Activated CD8-positive, alpha-beta memory T cell treated with anti-CD3 and anti-CD28 coated beads, Interleukin-2, amount 10 ng/mL, durations not matched to agents 7 days and 5 days (primary cell): ENCODE measurements at regions of chr6 and their contacts with region 1.

Region 1: GRCh38 chr6:25263657-25264056 is 15.5 kb upstream of the CARMIL1 start:
- DNase-seq: no peak
- ATAC-seq: no peak
- H3K4me3 Mint-ChIP-seq: no peak overlapping the region
- H3K27ac Mint-ChIP-seq: no peak overlapping the region
- H3K4me1 Mint-ChIP-seq: peaks cover 2% of the 10 kb centered on the region
- H3K27me3 Mint-ChIP-seq: peaks cover 18% of the 10 kb centered on the region

Region 2: GRCh38 chr6:24919004-24919892 is 344.4 kb before region 1 on chr6:
- CTCF ChIA-PET with region 1: no interaction called
- DNase-seq: no peak
- ATAC-seq: peak; percentile 40
- H3K4me3 Mint-ChIP-seq: peak overlapping the region; percentile 1
- H3K27ac Mint-ChIP-seq: peak overlapping the region; percentile 47
- H3K4me1 Mint-ChIP-seq: peaks cover 67% of the 10 kb centered on the region
- H3K27me3 Mint-ChIP-seq: no peaks in the 10 kb centered on the region

Region 3: GRCh38 chr6:25173951-25174474 is 89.6 kb before region 1 on chr6:
- CTCF ChIA-PET with region 1: no interaction called
- DNase-seq: no peak
- ATAC-seq: no peak
- H3K4me3 Mint-ChIP-seq: no peak overlapping the region
- H3K27ac Mint-ChIP-seq: peak overlapping the region; percentile 47
- H3K4me1 Mint-ChIP-seq: peaks cover 64% of the 10 kb centered on the region
- H3K27me3 Mint-ChIP-seq: no peaks in the 10 kb centered on the region

Region 4: DNA sequence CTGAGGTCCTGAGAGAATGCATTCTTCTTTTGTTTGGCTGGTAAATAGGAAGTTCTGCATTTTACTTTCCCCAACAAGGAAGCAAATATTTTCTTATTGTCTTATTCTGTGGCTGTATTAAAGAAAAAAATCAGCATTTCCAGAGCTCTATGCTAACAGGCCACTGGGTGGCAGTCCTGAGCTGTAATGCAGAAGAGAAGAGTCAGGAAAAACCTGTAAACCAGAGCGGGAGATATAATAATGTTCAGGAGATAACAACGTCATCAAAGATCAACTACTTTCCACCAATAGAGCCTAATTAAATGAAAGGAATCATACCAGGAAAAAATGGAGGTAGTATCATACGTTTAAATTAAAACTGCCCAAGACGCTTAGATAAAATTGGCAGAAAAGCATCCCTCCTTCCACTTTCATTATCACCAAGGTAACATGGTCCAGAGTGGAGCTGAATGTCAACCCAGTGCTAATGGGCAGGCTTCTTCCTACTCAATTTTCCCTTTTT is 40.1 kb before region 1 on chr6:
- CTCF ChIA-PET with region 1: interaction called, 16 read pairs
- DNase-seq: peak; percentile 74
- ATAC-seq: peak; percentile 67
- H3K4me3 Mint-ChIP-seq: peak overlapping the region; percentile 69
- H3K27ac Mint-ChIP-seq: no peak overlapping the region
- H3K4me1 Mint-ChIP-seq: peaks cover 15% of the 10 kb centered on the region
- H3K27me3 Mint-ChIP-seq: no peaks in the 10 kb centered on the region

Region 5: GRCh38 chr6:25250878-25251277 is 12.8 kb before region 1 on chr6:
- CTCF ChIA-PET with region 1: interaction called, 19 read pairs
- DNase-seq: no peak
- ATAC-seq: no peak
- H3K4me3 Mint-ChIP-seq: no peak overlapping the region
- H3K27ac Mint-ChIP-seq: no peak overlapping the region
- H3K4me1 Mint-ChIP-seq: peaks cover 10% of the 10 kb centered on the region
- H3K27me3 Mint-ChIP-seq: peaks cover 15% of the 10 kb centered on the region

Region 6: DNA sequence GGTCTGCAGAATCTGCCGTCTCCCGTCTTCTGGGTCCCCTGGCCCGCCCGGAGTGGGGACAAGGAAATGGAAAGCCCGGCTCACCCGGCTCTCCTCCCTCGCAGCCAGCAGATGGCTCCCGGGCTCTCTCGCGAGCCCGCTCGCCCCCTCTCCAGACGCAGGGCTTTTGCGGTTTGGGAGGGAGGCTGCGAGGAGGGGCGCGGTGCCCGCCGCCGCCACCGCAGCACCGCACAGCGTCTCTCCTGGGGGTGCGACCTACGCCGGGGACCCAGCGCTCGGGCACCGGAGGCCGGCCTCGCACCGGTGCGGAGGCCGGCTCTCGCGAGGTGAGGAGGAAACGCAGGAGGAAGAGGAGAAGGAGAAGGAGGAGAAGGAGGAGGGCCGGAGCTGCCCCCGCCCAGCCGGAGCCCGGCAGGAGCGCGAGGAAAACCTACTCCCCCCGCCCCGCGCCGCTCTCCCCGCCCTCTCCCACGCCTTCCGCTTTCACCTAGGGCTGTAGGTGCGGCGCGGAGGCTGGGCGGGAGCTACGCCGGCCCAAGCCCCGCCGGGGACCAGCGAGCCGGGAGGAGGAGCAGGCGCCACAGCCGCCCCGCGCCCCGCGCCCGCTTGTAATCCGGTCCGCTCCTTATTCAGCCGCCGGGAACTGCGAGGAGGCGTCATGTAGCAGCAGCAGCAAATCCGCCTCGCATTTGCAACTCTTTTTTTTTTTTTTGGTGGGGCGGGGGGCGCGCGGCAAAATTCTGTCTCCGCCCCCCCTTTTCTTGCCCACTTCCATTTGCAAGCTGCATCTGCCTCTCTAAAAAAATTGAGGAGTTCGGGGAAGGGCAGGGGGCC is 15.5 kb after region 1 on chr6 and contains the start of gene CARMIL1:
- CTCF ChIA-PET with region 1: interaction called, 23 read pairs
- DNase-seq: peak; percentile 80
- ATAC-seq: peak; percentile 90
- H3K4me3 Mint-ChIP-seq: peak within 1 kb of the TSS; percentile 76
- H3K27ac Mint-ChIP-seq: peak within 1 kb of the TSS; percentile 62
- H3K4me1 Mint-ChIP-seq: peaks cover 20% of the 10 kb centered on the region
- H3K27me3 Mint-ChIP-seq: peaks cover 18% of the 10 kb centered on the region
- total RNA-seq, gene CARMIL1: 3.4 to 3.8 TPM

Region 7: GRCh38 chr6:25346064-25346463 is 82.4 kb after region 1 on chr6:
- CTCF ChIA-PET with region 1: no interaction called
- DNase-seq: no peak
- ATAC-seq: no peak
- H3K4me3 Mint-ChIP-seq: no peak overlapping the region
- H3K27ac Mint-ChIP-seq: no peak overlapping the region
- H3K4me1 Mint-ChIP-seq: peaks cover 2% of the 10 kb centered on the region
- H3K27me3 Mint-ChIP-seq: no peaks in the 10 kb centered on the region

Region 8: GRCh38 chr6:25377664-25378063 is 114.0 kb after region 1 on chr6:
- CTCF ChIA-PET with region 1: no interaction called
- DNase-seq: no peak
- ATAC-seq: peak; percentile 9
- H3K4me3 Mint-ChIP-seq: no peak overlapping the region
- H3K27ac Mint-ChIP-seq: no peak overlapping the region
- H3K4me1 Mint-ChIP-seq: peaks cover 12% of the 10 kb centered on the region
- H3K27me3 Mint-ChIP-seq: no peaks in the 10 kb centered on the region

Region 9: DNA sequence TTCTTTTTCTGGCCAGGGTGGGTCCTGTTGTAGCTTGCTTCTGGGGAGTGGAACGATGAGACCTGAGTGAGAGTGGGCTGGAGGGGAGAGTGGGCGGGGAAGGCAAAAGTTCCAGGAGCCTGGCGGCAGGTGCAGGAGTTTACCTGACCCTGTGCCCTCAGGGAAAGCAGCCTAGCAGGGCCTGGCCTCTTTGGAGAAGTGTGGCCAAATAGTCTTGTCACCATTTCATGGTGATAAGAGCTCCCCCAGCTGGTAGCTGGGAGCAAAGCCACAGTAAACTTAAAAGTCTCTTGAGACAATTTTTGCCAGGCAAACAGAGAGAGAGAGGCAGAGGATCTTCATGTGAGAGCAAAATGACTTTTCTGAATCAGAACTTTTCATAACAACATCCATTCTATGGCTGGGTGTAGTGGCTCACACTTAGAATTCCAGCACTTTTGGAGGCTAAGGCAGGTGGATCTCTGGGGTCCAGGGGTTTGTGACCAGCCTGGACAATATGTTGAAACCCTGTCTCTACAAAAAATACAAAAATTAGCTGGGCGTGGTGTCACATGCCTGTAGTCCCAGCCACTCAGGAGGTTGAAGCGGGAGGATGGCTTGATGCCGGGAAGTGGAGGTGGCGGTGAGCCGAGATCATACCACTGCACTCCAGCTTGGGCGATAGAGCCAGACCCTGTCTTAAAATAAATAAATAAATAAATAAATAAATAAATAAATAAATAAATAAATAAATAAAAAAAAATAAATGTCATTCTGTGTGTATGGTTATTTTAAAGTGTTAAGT is 226.6 kb after region 1 on chr6:
- CTCF ChIA-PET with region 1: interaction called, 94 read pairs
- DNase-seq: peak; percentile 79
- ATAC-seq: peak; percentile 79
- H3K4me3 Mint-ChIP-seq: no peak overlapping the region
- H3K27ac Mint-ChIP-seq: no peak overlapping the region
- H3K4me1 Mint-ChIP-seq: peaks cover 4% of the 10 kb centered on the region
- H3K27me3 Mint-ChIP-seq: no peaks in the 10 kb centered on the region

Region 10: DNA sequence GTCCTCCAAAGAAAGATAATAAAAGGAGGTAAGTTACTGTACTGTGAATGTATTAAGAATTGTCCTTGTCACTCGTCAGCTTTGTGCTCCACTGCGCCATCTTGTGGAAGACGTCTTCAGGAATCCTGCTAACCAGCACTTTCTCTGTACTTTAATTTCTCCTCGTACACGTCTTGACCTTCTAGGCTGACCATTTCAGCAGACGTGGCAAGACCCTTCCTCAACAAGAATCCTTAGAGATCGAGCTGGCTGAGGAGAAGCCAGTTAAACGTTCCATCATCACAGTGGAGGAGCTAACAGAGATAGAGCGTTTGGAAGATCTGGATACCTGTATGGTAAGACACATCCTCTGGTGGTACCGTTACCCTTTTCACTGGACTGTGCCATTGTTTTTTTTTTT is 292.9 kb after region 1 on chr6:
- CTCF ChIA-PET with region 1: interaction called, 39 read pairs
- DNase-seq: peak; percentile 86
- ATAC-seq: peak; percentile 64
- H3K4me3 Mint-ChIP-seq: no peak overlapping the region
- H3K27ac Mint-ChIP-seq: no peak overlapping the region
- H3K4me1 Mint-ChIP-seq: peaks cover 2% of the 10 kb centered on the region
- H3K27me3 Mint-ChIP-seq: no peaks in the 10 kb centered on the region

Region 11: DNA sequence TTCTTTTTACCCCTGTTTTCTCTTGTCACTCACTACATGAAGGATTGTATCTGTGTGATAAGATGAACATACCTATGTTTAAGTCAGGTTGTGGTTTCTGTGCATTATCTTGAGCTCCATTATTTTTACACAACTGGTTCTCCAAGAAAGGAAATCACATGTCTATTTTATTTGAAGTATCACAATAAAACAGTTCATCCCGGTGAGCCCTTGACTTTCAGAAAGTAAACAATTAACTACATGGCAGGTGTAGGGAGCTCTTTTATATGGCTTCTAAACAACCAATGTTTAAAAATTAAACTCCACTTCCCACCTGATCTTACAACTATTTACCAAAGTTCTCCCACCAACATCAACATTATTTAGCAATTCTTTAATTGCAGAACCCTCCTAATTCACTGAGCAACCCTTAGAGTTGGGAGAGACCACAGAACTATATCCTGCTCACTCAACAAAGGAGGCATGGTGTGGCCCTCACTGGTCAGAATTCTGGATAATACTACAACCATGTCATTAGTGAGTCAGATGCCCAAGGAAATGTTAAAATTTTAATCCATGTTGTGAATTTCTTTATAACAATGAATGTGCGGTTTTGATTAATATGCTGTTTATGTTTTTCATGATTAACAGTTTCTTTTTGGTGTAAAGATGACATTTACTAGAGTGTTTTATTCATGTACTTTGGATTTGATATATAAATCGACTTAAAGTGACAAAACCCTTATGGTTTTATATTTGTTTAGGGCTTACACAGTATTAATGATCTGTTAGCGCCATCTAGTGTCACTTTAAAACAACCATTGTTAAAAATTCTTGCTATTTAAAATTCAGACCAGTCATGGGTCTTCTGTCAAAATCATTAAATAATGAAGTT is 338.4 kb after region 1 on chr6:
- CTCF ChIA-PET with region 1: interaction called, 14 read pairs
- DNase-seq: no peak
- ATAC-seq: no peak
- H3K4me3 Mint-ChIP-seq: no peak overlapping the region
- H3K27ac Mint-ChIP-seq: no peak overlapping the region
- H3K4me1 Mint-ChIP-seq: no peaks in the 10 kb centered on the region
- H3K27me3 Mint-ChIP-seq: no peaks in the 10 kb centered on the region